Common myeloid progenitor, CD34-positive (primary cell): ENCODE measurements at regions of chr1 and their contacts with region 1.

Region 1: GRCh38 chr1:24586970-24587820 is 31.3 kb downstream of the NCMAP start:
- DNase-seq: peak; percentile 63 to 80 (median 79)
- H3K4me3 ChIP-seq: no peak overlapping the region
- H3K27ac ChIP-seq: no peak overlapping the region
- H3K4me1 ChIP-seq: peaks cover 0 to 12% (median 8%) of the 10 kb centered on the region in 4 experiments
- H3K27me3 ChIP-seq: peaks cover 0 to 2% (median 0%) of the 10 kb centered on the region in 5 experiments

Region 2: DNA sequence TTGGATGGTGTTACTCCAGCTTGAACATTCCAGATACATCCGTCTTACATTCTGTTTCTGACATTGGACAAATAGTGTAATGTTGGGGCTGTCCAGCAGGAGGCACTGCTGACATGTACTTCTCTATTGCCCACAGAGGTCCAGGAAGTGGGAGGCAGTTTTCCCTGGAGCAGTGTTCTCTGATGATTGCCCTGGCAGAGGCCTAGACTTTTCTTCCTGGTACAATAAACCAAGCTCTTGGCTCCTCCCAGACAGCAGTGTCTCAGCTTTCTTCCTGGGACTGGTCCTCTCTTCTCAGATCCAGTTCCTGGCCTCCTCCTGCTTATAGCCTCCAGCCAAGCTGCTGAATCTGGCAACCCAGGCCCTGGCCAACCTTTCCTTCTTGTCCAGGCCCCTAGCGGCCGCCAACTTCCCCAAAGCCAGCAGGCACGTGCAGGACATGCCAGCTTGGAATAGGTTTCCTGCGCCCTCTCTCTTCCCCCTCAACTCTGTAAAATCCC is 385.2 kb before region 1 on chr1:
- CTCF ChIA-PET with region 1: no interaction called
- POLR2A ChIA-PET with region 1: no interaction called
- DNase-seq: peak; percentile 37 to 55 (median 43)
- H3K4me3 ChIP-seq: no peak overlapping the region
- H3K27ac ChIP-seq: no peak overlapping the region
- H3K4me1 ChIP-seq: peaks cover 0 to 3% (median 0%) of the 10 kb centered on the region in 4 experiments
- H3K27me3 ChIP-seq: peaks cover 0 to 4% (median 0%) of the 10 kb centered on the region in 5 experiments

Region 3: GRCh38 chr1:24526940-24527542 is 60.2 kb before region 1 on chr1:
- CTCF ChIA-PET with region 1: interaction called, 13 read pairs
- POLR2A ChIA-PET with region 1: no interaction called
- DNase-seq: peak; percentile 40 to 63 (median 57)
- H3K4me3 ChIP-seq: no peak overlapping the region
- H3K27ac ChIP-seq: no peak overlapping the region
- H3K4me1 ChIP-seq: no peaks in the 10 kb centered on the region
- H3K27me3 ChIP-seq: no peaks in the 10 kb centered on the region

Region 4: GRCh38 chr1:24541711-24542346 is 45.4 kb before region 1 on chr1:
- CTCF ChIA-PET with region 1: interaction called, 17 read pairs
- POLR2A ChIA-PET with region 1: no interaction called
- DNase-seq: peak in 1 of 3 donors; percentile 13
- H3K4me3 ChIP-seq: peak overlapping the region in 1 of 7 experiments; percentile 12
- H3K27ac ChIP-seq: no peak overlapping the region
- H3K4me1 ChIP-seq: peaks cover 4 to 17% (median 13%) of the 10 kb centered on the region in 4 experiments
- H3K27me3 ChIP-seq: no peaks in the 10 kb centered on the region

Region 5: DNA sequence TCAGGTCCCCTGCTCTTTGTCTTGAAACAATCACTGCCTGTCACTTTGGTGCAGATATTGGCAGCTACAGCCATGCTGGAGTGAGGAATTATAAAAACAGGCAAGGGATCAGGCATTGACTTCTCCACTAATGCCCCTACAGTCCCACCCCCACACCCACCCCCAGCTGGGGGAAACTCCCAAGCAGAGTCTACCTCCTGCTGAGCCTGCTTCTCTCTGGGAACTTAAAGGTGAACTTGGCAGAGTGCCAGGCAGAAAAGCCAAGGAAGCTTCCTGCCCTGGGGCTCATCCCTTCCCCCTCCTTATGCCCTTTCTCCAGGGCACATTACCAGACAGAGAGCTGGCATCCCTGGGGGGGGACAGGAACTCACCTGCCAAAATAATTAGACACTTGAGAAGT is 24.6 kb before region 1 on chr1:
- CTCF ChIA-PET with region 1: interaction called, 20 read pairs
- POLR2A ChIA-PET with region 1: no interaction called
- DNase-seq: no peak
- H3K4me3 ChIP-seq: no peak overlapping the region
- H3K27ac ChIP-seq: no peak overlapping the region
- H3K4me1 ChIP-seq: peaks cover 0 to 18% (median 10%) of the 10 kb centered on the region in 4 experiments
- H3K27me3 ChIP-seq: peaks cover 0 to 3% (median 0%) of the 10 kb centered on the region in 5 experiments

Region 6: GRCh38 chr1:24567792-24568388 is 19.3 kb before region 1 on chr1:
- CTCF ChIA-PET with region 1: interaction called, 20 read pairs
- POLR2A ChIA-PET with region 1: no interaction called
- DNase-seq: peak; percentile 69 to 87 (median 82)
- H3K4me3 ChIP-seq: peak overlapping the region in 3 of 7 experiments; percentile 25 to 56 (median 33)
- H3K27ac ChIP-seq: peak overlapping the region in 1 of 2 experiments; percentile 36
- H3K4me1 ChIP-seq: peaks cover 0 to 28% (median 23%) of the 10 kb centered on the region in 4 experiments
- H3K27me3 ChIP-seq: no peaks in the 10 kb centered on the region

Region 7: DNA sequence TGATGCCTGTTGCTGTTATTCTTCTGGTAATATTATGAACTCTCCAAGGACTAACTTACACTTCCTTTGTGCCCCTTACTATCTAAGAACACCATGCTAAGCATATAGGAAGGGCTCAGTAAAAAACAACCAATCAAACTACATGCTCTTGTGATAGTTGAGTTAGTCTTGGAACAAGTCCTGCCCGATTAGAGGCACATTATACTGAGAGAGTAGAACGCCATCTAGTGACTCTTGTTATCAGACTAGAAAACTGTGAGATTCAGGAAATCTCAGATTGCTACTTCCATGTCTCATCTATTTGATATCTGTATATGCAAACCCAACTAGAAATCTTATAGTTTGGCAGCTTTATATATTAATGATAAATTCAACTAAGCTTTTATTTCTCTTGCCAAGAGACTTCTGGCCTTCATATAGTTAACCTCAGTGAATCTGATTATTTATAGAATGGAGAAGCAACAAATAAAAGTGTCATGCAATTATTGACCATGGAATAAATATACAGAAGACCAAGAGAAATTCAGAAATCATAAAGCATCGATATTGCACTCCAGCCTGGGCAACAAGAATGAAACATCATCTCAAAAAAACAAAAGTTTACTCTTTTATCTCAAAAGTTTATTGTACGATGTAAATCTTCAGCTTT is 48.1 kb after region 1 on chr1:
- CTCF ChIA-PET with region 1: interaction called, 25 read pairs
- POLR2A ChIA-PET with region 1: no interaction called
- DNase-seq: peak; percentile 72 to 77 (median 75)
- H3K4me3 ChIP-seq: no peak overlapping the region
- H3K27ac ChIP-seq: no peak overlapping the region
- H3K4me1 ChIP-seq: peaks cover 0 to 8% (median 4%) of the 10 kb centered on the region in 4 experiments
- H3K27me3 ChIP-seq: no peaks in the 10 kb centered on the region